HepG2 (cell line): ENCODE measurements at regions of chr3 and their contacts with region 1.

Region 1: DNA sequence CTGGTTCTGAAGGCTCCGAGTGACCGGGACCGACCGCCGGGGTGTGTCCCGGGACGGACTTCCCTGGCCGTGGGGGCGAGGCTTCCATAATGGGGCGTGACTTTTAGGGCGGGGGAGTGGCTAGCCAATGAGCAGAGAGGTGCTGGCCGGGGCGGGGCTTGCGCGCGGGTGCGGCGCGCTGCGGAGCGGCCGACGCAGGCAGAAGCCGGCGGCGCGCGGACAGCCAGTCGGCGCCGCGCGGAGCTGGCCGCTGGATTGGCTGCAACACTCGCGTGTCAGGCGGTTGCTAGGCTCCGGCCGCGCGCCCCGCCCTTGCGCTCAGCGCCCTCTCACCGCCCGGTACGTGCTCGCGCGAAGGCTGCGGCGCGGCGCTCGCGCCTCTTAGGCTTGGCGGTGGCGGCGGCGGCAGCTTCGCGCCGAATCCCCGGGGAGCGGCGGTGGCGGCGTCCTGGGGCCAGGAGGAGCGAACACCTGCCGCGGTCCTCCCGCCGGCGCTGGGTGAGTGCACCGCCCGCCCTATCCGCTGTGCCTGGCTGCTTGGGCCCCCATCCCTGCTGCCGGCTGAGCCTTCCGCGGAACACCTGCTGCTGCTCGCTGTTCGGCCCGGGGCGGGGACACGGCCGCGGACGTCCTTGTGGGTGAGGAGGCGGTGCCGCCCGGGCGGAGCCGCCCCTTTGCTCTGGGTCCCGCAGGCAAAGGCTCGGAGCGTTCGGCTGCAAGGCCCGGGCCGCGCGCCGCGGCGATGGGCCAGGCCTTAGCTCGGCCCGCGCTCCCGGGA is at the start of gene DAG1:
- DNase-seq: peak; percentile 89
- ATAC-seq: peak; percentile 87
- H3K4me3 ChIP-seq: peak within 1 kb of the TSS; percentile 74 to 94 (median 84)
- H3K27ac ChIP-seq: peak within 1 kb of the TSS; percentile 93
- H3K4me1 ChIP-seq: peaks cover 58% of the 10 kb centered on the region
- H3K27me3 ChIP-seq: no peaks in the 10 kb centered on the region; a peak in 1 of 5 replicates
- CTCF ChIP-seq: peak; percentile 17; the same call in 1 of the 2 replicates
- EP300 ChIP-seq: no peak
- POLR2A ChIP-seq: peak; percentile 34 to 78
- RAD21 ChIP-seq: peak; percentile 70
- total RNA-seq, gene DAG1: 26.0 and 50.4 TPM in 2 replicates

Region 2: DNA sequence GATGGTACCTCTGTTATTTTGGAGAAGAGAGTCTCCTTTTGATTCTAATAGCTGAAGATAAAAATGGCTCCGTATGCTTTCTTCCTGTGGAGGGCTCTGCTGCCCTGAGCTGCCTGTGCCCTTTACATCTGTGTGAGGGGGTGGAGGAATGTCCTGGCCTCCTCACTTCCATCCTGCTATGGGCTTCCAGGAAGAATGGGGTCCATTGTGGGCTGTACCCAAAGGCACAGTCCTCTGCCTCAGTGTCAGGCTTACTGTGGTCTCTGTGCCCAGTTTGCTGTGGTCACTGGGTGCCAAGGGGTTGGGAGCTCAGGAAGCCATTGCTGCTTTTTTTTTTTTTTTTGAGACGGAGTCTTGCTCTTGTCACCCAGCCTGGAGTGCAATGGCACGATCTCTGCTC is 14.3 kb after region 1 on chr3:
- CTCF ChIA-PET with region 1: no interaction called
- POLR2A ChIA-PET with region 1: interaction called, 28 read pairs
- in situ Hi-C with region 1: no loop called
- intact Hi-C with region 1: loop called (anchors 2 kb)
- DNase-seq: no peak
- ATAC-seq: peak; percentile 50
- H3K4me3 ChIP-seq: no peak overlapping the region
- H3K27ac ChIP-seq: peak overlapping the region; percentile 83
- H3K4me1 ChIP-seq: peaks cover 45% of the 10 kb centered on the region
- H3K27me3 ChIP-seq: no peaks in the 10 kb centered on the region
- CTCF ChIP-seq: peak; percentile 10; the same call in 1 of the 2 replicates
- EP300 ChIP-seq: no peak
- POLR2A ChIP-seq: no peak
- RAD21 ChIP-seq: no peak

Region 3: GRCh38 chr3:49500732-49501609 is 30.8 kb after region 1 on chr3:
- CTCF ChIA-PET with region 1: no interaction called
- POLR2A ChIA-PET with region 1: interaction called, 19 read pairs
- in situ Hi-C with region 1: no loop called
- intact Hi-C with region 1: no loop called
- DNase-seq: peak; percentile 89
- ATAC-seq: peak; percentile 96
- H3K4me3 ChIP-seq: peak overlapping the region in 2 of 3 experiments; percentile 18 to 65; a peak in 2 of 6 replicates
- H3K27ac ChIP-seq: peak overlapping the region; percentile 84
- H3K4me1 ChIP-seq: peaks cover 57% of the 10 kb centered on the region
- H3K27me3 ChIP-seq: no peaks in the 10 kb centered on the region
- CTCF ChIP-seq: no peak
- EP300 ChIP-seq: peak in 1 of 2 experiments; percentile 59; a peak in 1 of 4 replicates
- POLR2A ChIP-seq: peak; percentile 46 to 52; a peak in 2 of 4 replicates
- RAD21 ChIP-seq: no peak

Region 4: DNA sequence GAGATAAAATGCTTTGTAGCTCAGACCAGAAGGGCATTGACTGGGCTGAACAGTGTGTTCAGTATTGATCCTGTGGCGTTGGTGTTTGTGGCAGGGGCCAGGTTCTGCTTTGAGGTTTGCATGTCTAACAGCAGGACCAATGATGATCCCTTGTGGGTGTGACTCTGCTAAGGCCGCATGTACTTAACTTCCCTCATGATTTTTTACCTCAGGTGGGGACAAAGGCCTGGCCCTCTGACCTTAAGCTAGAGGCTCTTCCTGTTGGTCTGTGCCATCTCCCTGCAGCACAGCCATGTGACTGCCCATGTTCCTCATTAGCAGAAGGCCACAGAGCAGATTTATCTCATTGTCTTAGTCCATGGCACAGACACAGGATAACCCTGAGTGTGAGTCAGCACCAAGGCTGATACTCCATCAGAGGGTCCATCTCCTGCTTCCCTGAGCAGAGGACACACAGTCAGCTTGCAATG is 49.8 kb after region 1 on chr3:
- CTCF ChIA-PET with region 1: no interaction called
- POLR2A ChIA-PET with region 1: interaction called, 8 read pairs
- in situ Hi-C with region 1: loop called (anchors 5 kb)
- intact Hi-C with region 1: no loop called
- DNase-seq: no peak
- ATAC-seq: peak; percentile 90
- H3K4me3 ChIP-seq: no peak overlapping the region
- H3K27ac ChIP-seq: peak overlapping the region; percentile 45
- H3K4me1 ChIP-seq: peaks cover 45% of the 10 kb centered on the region
- H3K27me3 ChIP-seq: no peaks in the 10 kb centered on the region; a peak in 1 of 5 replicates
- CTCF ChIP-seq: no peak
- EP300 ChIP-seq: no peak
- POLR2A ChIP-seq: no peak
- RAD21 ChIP-seq: no peak

Region 5: GRCh38 chr3:49668414-49668797 is 198.3 kb after region 1 on chr3:
- CTCF ChIA-PET with region 1: no interaction called
- POLR2A ChIA-PET with region 1: interaction called, 11 read pairs
- in situ Hi-C with region 1: no loop called
- intact Hi-C with region 1: loop called (anchors 5 kb)
- DNase-seq: peak; percentile 76
- ATAC-seq: peak; percentile 56
- H3K4me3 ChIP-seq: no peak overlapping the region
- H3K27ac ChIP-seq: peak overlapping the region; percentile 80
- H3K4me1 ChIP-seq: peaks cover 92% of the 10 kb centered on the region
- H3K27me3 ChIP-seq: no peaks in the 10 kb centered on the region
- CTCF ChIP-seq: peak; percentile 82
- EP300 ChIP-seq: peak in 1 of 2 experiments; percentile 74; a peak in 2 of 4 replicates
- POLR2A ChIP-seq: no peak
- RAD21 ChIP-seq: peak; percentile 42; the same call in 1 of the 2 replicates

Region 6: GRCh38 chr3:50050361-50050760 is 580.2 kb after region 1 on chr3:
- CTCF ChIA-PET with region 1: no interaction called
- POLR2A ChIA-PET with region 1: no interaction called
- in situ Hi-C with region 1: no loop called
- intact Hi-C with region 1: no loop called
- DNase-seq: peak; percentile 34
- ATAC-seq: no peak
- H3K4me3 ChIP-seq: no peak overlapping the region
- H3K27ac ChIP-seq: no peak overlapping the region
- H3K4me1 ChIP-seq: peaks cover 11% of the 10 kb centered on the region
- H3K27me3 ChIP-seq: no peaks in the 10 kb centered on the region
- CTCF ChIP-seq: no peak
- EP300 ChIP-seq: no peak
- POLR2A ChIP-seq: no peak
- RAD21 ChIP-seq: no peak